ENCODE measurements at regions of chr6 and their contacts with region 1.

Region 1: DNA sequence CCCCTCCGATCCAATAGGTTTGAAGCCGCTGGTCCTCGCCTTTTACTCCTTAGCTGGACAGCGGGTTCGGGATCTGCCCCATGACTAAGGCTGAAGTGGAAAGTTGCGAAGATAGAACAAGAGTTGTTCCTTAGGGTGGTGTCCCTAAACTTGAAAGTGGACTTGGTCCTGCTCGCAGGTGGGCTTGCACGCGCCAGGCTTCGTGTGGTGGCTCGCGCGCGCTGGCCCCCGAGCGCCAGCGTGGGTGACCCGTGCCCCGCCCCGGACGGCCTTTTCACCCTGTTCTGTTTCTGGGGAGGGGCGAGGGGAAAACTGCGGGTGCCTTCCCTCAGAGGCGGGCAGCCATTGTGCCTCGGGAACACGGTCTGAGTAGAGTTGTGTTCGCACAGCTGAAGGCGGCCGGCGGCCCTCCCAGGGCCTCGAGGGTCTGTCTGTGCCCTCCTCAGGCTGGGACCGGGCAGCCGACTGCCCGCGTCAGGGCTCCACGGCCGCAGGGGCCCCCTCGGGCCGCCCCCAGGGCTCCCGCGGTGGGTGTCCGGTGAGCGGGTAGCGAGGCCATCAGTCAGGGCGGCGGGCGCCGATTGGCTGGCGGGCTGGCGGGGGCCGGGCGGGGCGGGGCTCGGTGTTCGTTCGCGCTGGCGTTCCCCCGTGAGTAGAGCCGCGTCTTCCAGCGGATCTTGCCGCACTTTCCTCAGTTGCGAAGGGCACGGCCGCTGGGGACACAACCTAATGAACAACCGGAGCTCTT is 33.0 kb downstream of the RREB1 start:
- DNase-seq: peak; percentile 91 to 99 (median 99)
- ATAC-seq: peak; percentile 84
- H3K4me3 ChIP-seq: peak overlapping the region; percentile 39
- H3K27ac ChIP-seq: peak overlapping the region; percentile 92
- H3K4me1 ChIP-seq: peaks cover 45 to 81% of the 10 kb centered on the region in 2 experiments
- H3K27me3 ChIP-seq: no peaks in the 10 kb centered on the region
- CTCF ChIP-seq: no peak
- EP300 ChIP-seq: no peak; the same call in 1 of the 2 replicates
- POLR2A ChIP-seq: peak; percentile 86
- RAD21 ChIP-seq: no peak

Region 2: DNA sequence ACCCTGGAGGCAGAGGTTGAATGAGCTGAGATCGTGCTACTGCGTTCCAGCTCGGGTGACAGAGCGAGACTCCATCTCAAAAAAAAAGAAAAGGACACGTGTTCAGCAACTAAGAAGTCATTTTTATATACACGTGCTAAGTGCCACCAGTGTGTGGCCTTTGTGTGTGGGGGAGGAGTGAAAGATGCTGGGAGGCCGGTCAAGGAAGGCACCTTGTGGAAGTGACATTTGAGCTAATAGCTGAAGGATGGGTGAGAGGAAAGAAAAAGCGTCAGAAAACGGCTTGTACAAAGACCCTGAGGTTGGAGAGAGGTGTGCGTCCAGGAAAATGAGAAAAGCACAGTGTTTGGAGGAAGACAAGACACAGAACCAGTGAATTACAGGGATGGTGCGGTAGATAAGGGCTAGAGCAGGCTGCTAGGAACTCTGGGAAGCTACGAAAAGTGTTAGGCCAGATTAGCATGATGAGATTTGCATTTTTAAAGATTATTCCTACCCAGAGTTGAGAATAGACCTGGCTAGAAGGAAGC is 21.5 kb before region 1 on chr6:
- CTCF ChIA-PET with region 1: no interaction called
- POLR2A ChIA-PET with region 1: interaction called, 12 read pairs
- in situ Hi-C with region 1: no loop called
- intact Hi-C with region 1: loop called (anchors 2 kb)
- DNase-seq: peak; percentile 60 to 86 (median 72)
- ATAC-seq: peak; percentile 82
- H3K4me3 ChIP-seq: peak overlapping the region; percentile 2; the same call in 1 of the 2 replicates
- H3K27ac ChIP-seq: peak overlapping the region; percentile 68
- H3K4me1 ChIP-seq: peaks cover 38 to 45% of the 10 kb centered on the region in 2 experiments
- H3K27me3 ChIP-seq: no peaks in the 10 kb centered on the region
- CTCF ChIP-seq: no peak
- EP300 ChIP-seq: peak; percentile 66; the same call in 1 of the 2 replicates
- POLR2A ChIP-seq: peak; percentile 76
- RAD21 ChIP-seq: no peak

Region 3: DNA sequence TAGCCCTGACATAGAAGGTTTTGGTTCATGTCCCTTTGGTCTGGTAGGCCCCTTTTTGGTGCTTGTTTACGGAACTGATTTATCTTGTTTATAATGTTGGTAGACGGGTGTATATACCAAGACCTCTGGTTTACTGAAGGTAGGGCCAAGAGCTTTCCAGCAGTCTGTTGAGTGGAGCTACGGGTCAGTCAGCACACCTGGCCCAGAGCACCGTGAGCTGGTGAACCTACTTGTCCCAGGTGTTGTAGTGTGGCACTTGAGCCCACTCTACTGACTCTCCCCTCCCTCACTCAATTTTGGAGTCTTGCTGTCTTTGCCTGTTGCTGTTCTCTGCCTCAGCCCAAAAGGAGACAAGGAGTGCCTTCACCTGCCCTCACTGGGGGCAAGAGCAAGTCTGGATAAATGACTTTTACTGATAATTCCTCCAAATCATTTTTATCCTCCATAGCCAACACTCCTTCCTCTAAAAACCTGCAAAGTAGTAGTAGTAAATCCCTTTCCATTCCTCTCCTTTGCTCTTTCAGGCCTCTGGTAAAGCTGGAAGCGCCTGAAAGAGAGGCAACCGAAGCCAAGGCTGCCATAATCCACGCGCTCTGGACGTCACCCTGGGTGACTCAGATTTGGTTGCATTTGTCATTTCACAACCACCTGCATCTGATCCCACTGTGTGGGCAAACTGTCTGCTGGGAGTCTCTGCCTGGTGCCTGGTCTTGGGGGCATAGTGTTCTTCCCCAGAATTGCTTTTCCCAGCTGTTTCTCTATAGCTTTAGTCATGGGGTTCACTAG is 10.8 kb before region 1 on chr6:
- CTCF ChIA-PET with region 1: no interaction called
- POLR2A ChIA-PET with region 1: interaction called, 12 read pairs
- in situ Hi-C with region 1: no loop called
- intact Hi-C with region 1: no loop called
- DNase-seq: no peak
- ATAC-seq: peak; percentile 31
- H3K4me3 ChIP-seq: no peak overlapping the region
- H3K27ac ChIP-seq: peak overlapping the region; percentile 42
- H3K4me1 ChIP-seq: peaks cover 15 to 41% of the 10 kb centered on the region in 2 experiments; a peak in 4 of 5 replicates
- H3K27me3 ChIP-seq: no peaks in the 10 kb centered on the region
- CTCF ChIP-seq: no peak
- EP300 ChIP-seq: no peak
- POLR2A ChIP-seq: no peak
- RAD21 ChIP-seq: no peak

Region 4: DNA sequence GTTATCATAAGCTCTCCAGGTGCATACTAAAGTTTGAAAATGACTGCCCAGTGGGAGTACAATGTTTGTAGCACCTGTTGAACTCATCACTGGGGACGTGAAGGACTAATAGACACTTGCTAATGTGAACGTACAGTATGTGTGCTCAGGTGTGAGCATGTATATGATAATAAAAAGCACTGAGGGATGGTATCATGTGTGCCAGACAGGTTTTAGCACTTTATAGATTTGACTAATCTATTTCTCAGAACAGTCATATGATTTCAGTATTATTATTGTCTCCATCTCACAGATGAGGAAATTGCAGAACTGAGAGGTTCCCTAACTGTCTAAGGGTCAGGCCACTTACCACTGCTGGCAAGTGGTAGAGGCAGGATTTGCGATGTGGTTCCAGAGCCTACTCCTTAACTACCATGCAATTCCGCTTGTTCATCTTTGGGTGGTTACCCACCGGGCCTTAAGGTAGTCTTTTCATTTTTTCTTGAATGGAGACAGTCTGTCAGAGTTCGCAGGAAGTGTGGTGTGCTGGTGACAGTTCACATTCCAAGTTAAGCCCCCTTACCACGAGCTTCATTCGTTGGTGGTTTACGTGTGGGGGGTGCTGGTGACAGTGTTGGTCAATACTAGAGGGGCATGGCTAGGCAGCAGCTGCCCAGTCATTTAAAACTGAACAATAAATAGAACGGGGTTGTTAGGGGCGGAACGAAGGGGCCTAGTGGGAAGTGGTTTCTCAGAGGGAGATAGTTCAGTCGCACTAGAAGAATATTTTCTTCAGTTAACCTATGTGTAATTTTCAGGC is 13.7 kb after region 1 on chr6:
- CTCF ChIA-PET with region 1: no interaction called
- POLR2A ChIA-PET with region 1: interaction called, 14 read pairs
- in situ Hi-C with region 1: no loop called
- intact Hi-C with region 1: no loop called
- DNase-seq: no peak
- ATAC-seq: no peak
- H3K4me3 ChIP-seq: no peak overlapping the region
- H3K27ac ChIP-seq: no peak overlapping the region
- H3K4me1 ChIP-seq: peaks cover 31 to 70% of the 10 kb centered on the region in 2 experiments
- H3K27me3 ChIP-seq: no peaks in the 10 kb centered on the region
- CTCF ChIP-seq: no peak
- EP300 ChIP-seq: no peak
- POLR2A ChIP-seq: no peak
- RAD21 ChIP-seq: no peak